Activated T-helper 2 cell treated with anti-CD3 and anti-CD28 coated beads, Interferon-gamma antibody, Interleukin-2, Interleukin-4, amounts not matched to agents 10 μg/mL and 5 μg/mL and 100 μg/mL, durations not matched to agents 14 hours and 24 hours and 36 hours (primary cell): ENCODE measurements at regions of chr4 and their contacts with region 1.

Region 1: DNA sequence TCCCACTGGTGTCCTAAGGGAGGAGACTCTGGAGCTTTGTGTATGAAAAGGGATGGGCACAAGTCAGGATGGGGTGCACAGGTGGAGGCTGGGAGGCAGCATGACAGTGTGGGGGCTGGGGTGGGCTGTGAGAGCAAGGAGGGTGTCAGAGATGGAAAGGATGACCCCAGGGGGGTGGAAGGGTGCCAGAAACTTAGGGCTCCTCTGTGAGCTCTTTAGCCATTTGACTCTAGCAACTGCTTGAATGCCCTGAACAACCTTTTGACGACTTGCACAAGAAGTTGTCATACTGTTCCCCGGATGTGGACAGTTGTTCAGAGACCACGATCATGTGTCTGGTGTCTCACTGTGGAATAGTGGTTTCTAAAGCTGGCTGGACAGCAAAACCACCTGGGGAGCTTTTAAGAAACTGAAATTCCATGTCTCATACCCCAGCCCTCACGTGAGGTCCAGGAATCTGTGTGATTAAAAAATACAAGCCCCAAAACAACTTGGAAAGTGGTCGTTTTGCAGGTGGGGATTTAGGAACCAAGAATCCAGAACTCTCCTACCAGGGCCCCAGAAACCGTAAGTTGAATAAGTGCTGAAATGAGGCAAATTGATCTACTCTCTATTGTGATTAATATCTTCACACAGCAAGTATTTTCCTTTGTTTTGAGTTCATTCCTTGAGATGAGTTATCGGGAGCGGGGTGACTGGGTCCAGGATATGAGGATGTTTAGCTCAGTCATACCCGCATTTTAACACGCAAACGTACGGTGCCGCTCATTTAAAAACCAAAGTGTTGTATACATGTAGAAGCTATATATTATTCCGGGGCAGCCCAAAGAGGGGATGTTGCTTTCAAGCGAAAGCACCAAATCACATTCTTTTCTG is 3.4 kb downstream of the RHOH start:
- DNase-seq: peak; percentile 74
- H3K4me3 Mint-ChIP-seq: peak overlapping the region; percentile 90
- H3K27ac Mint-ChIP-seq: peak overlapping the region; percentile 94
- H3K4me1 Mint-ChIP-seq: peaks cover 52% of the 10 kb centered on the region
- H3K27me3 Mint-ChIP-seq: no peaks in the 10 kb centered on the region

Region 2: DNA sequence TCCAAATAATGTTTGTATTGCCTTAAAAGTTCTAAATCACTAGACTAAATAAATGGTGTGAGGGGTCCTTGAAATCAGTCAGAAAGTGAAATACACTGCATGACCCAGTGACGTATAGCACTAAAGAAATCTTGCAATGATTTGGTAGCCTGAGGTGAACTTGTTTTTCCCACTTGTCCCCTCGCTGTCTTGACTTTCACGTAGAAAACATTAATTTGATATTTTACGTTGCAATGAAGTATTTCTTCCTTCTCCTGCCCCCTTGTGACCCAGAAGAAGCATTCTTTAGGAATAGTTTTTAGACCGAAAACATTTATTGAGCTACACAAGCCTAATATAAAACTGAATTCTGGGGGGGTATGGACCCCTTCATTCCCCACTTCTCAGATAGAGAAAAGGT is 789.8 kb before region 1 on chr4:
- intact Hi-C with region 1: no loop called
- DNase-seq: no peak
- H3K4me3 Mint-ChIP-seq: no peak overlapping the region
- H3K27ac Mint-ChIP-seq: no peak overlapping the region
- H3K4me1 Mint-ChIP-seq: no peaks in the 10 kb centered on the region
- H3K27me3 Mint-ChIP-seq: peaks cover 6% of the 10 kb centered on the region

Region 3: GRCh38 chr4:40056716-40057585 is 143.3 kb before region 1 on chr4 and contains the start of gene N4BP2:
- intact Hi-C with region 1: loop called (anchors 1 kb)
- DNase-seq: peak; percentile 68
- H3K4me3 Mint-ChIP-seq: peak within 1 kb of the TSS; percentile 96
- H3K27ac Mint-ChIP-seq: peak within 1 kb of the TSS; percentile 99
- H3K4me1 Mint-ChIP-seq: peaks cover 25% of the 10 kb centered on the region
- H3K27me3 Mint-ChIP-seq: no peaks in the 10 kb centered on the region
- total RNA-seq, gene N4BP2: 23.2 and 23.8 TPM in 2 replicates

Region 4: GRCh38 chr4:40211224-40212185 is 11.3 kb after region 1 on chr4:
- intact Hi-C with region 1: loop called (anchors 2 kb)
- DNase-seq: no peak
- H3K4me3 Mint-ChIP-seq: peak overlapping the region; percentile 78
- H3K27ac Mint-ChIP-seq: peak overlapping the region; percentile 97
- H3K4me1 Mint-ChIP-seq: peaks cover 74% of the 10 kb centered on the region
- H3K27me3 Mint-ChIP-seq: no peaks in the 10 kb centered on the region

Region 5: DNA sequence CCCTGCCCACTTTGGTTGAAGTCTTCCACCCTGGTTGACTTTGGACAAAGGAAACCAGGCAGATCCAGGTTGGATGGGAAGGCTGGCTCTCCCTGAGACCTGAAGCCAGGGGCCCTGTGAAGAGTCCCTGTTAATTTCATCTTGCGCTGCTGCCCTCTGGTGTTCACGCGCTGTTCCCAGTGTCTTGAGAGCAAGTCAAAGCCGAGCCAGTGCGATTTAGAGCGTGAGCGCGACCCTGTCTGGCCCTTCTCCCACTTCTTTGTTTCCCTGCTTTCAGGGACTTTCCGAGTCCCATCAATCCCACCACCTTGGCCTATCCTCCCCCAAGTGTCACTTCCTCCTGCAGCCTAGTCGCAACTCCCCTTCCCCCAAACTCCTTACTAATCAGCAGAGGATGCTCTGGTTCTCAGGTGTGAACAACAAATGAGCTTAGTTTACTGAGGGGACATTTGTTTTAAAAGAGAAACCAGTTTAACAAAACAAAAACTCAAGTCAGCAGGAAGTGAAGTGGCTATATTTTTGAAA is 109.1 kb after region 1 on chr4:
- intact Hi-C with region 1: loop called (anchors 1 kb)
- DNase-seq: peak; percentile 82
- H3K4me3 Mint-ChIP-seq: peak overlapping the region; percentile 45
- H3K27ac Mint-ChIP-seq: peak overlapping the region; percentile 95
- H3K4me1 Mint-ChIP-seq: peaks cover 80% of the 10 kb centered on the region
- H3K27me3 Mint-ChIP-seq: no peaks in the 10 kb centered on the region

Region 6: GRCh38 chr4:40699648-40700047 is 499.4 kb after region 1 on chr4:
- intact Hi-C with region 1: loop called (anchors 2 kb)
- DNase-seq: no peak
- H3K4me3 Mint-ChIP-seq: peak overlapping the region; percentile 2
- H3K27ac Mint-ChIP-seq: peak overlapping the region; percentile 74
- H3K4me1 Mint-ChIP-seq: peaks cover 37% of the 10 kb centered on the region
- H3K27me3 Mint-ChIP-seq: no peaks in the 10 kb centered on the region